Activated naive CD4-positive, alpha-beta T cell treated with anti-CD3 and anti-CD28 coated beads for 36 hours (primary cell): ENCODE measurements at regions of chr10 and their contacts with region 1.

Region 1: DNA sequence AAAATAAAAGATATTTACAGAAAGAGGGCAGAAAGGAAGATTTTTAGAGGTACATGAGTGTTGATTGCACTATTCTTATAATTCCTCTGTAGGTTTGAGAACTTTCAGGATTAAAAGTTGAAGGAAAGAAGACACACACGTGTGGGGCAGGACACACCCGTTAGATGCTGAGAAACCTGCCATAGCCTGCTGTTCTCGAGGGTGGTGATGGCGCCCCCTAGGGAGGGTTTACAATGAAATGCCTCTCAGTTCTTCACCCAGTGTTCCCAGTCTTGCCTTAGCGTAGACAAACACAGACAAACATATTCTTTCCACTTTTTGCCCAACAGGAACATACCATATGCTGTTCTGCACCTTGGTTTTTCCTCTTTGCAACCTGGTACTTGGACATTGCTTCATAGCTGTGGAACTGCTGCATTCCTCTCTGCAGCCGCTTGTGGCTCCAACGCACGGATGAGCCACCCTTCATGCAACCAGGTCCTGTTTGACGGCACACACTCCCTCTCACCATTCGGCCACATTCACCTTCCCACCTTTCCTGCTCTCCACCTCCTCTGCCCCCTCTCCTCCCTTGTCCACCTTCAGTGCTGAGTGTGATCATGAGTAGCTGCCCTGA is 23.3 kb upstream of the HSPA12A start:
- DNase-seq: peak; percentile 66
- H3K4me3 Mint-ChIP-seq: no peak overlapping the region
- H3K27ac Mint-ChIP-seq: no peak overlapping the region
- H3K4me1 Mint-ChIP-seq: no peaks in the 10 kb centered on the region
- H3K27me3 Mint-ChIP-seq: peaks cover 50% of the 10 kb centered on the region

Region 2: DNA sequence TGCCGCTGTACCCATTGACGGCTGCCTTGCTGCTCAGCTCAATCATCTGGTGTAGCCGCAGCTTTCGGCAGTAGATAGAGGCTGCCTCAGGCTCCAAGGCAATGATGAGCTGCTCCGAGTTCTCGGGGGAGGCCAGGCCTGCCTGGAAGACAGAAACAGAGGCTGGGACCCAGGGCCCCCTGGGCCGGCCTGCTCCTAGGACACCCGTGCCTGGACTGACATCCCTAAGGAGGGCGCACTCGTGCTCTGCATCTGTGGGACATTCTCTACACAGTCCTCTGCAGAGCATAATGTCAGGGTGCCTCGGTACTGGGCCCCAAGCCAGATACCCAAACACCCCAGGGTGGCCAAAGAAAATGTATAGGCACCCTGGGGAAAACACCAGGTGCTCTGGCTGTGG is 81.8 kb before region 1 on chr10:
- CTCF ChIA-PET with region 1: interaction called, 11 read pairs
- intact Hi-C with region 1: loop called (anchors 1 kb)
- DNase-seq: no peak
- H3K4me3 Mint-ChIP-seq: no peak overlapping the region
- H3K27ac Mint-ChIP-seq: no peak overlapping the region
- H3K4me1 Mint-ChIP-seq: peaks cover 2% of the 10 kb centered on the region
- H3K27me3 Mint-ChIP-seq: peaks cover 27% of the 10 kb centered on the region

Region 3: GRCh38 chr10:116690356-116691322 is 75.0 kb before region 1 on chr10:
- CTCF ChIA-PET with region 1: interaction called, 4 read pairs
- intact Hi-C with region 1: loop called (anchors 2 kb)
- DNase-seq: no peak
- H3K4me3 Mint-ChIP-seq: no peak overlapping the region
- H3K27ac Mint-ChIP-seq: no peak overlapping the region
- H3K4me1 Mint-ChIP-seq: no peaks in the 10 kb centered on the region
- H3K27me3 Mint-ChIP-seq: peaks cover 55% of the 10 kb centered on the region

Region 4: DNA sequence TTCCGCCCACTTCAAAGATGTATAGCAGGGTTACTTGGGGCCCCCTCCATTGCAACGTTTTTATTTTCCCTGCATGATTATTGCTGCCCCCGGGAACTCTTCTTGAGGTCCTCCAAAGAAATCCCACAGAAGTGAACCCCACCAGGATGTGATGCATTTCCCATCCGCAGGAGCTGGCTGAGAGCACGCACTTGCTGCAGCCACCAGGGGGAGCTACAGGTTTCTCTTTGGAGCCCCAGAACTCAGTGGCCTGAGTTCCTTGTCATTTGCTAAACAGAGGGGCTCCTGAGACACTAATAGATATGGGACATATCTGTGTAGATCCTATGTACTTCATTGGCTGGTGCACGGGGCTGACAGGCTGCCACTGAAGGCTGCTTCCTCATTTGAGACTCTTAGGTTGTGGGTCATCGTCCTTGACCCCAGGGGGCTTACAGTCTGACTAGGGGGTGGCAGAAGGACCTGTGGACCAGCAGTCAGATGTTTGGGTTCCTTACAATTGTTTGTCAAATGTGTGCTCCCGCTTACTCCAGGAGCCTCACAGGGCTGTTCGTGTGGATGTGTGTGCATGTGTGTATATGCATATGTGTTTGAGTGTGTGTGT is 31.4 kb after region 1 on chr10:
- CTCF ChIA-PET with region 1: no interaction called
- intact Hi-C with region 1: no loop called
- DNase-seq: peak; percentile 83
- H3K4me3 Mint-ChIP-seq: no peak overlapping the region
- H3K27ac Mint-ChIP-seq: no peak overlapping the region
- H3K4me1 Mint-ChIP-seq: peaks cover 5% of the 10 kb centered on the region
- H3K27me3 Mint-ChIP-seq: peaks cover 24% of the 10 kb centered on the region